HEK293T (cell line): ENCODE measurements at regions of chr13 and their contacts with region 1.

Region 1: DNA sequence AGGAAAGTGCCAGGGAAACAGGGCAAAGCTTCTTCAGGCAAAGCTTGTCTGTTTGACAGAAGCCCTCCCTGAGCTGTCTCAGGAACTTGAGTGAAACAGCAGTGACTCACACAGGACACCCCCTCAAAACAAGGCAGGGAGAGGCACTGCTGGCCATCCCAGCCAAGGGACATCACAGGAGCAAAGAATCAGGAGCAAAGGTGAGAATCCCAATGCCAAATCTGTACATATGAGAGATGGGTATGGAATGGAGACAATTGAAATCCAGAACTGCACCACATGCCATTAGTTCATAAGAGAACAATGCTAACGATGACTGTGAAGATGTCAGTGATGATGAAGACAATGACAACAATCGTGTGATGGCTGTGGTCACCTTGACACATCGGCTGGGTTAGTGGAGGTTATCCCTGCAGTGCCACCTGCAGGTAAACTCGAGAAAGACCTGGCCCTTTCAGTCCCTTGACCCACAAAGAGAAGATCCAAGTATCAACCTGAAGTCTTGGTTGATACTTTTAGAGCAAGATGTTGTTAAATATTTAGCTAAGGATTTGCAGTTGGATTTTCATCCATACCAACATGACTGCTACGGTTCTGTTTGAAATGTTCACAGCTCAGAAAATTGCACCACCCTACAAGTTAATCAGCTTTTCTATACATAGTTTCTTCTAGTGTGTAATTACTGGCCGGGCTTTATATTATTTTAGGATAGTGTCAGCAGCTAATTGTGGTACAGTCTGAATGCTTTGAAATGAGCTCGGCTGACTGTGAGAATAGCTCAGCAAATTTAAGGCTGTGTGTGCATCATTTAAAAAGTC is 42.0 kb upstream of the IPO5 start:
- DNase-seq: peak; percentile 36

Region 2: GRCh38 chr13:97855570-97856303 is 55.8 kb before region 1 on chr13:
- CTCF ChIA-PET with region 1: interaction called, 16 read pairs
- POLR2A ChIA-PET with region 1: no interaction called
- DNase-seq: peak; percentile 65

Region 3: GRCh38 chr13:97946951-97947588 is 35.5 kb after region 1 on chr13:
- CTCF ChIA-PET with region 1: no interaction called
- POLR2A ChIA-PET with region 1: no interaction called
- DNase-seq: no peak